Right lobe of liver (tissue), 6 donors: ENCODE measurements at regions of chr22 and their contacts with region 1.

Region 1: DNA sequence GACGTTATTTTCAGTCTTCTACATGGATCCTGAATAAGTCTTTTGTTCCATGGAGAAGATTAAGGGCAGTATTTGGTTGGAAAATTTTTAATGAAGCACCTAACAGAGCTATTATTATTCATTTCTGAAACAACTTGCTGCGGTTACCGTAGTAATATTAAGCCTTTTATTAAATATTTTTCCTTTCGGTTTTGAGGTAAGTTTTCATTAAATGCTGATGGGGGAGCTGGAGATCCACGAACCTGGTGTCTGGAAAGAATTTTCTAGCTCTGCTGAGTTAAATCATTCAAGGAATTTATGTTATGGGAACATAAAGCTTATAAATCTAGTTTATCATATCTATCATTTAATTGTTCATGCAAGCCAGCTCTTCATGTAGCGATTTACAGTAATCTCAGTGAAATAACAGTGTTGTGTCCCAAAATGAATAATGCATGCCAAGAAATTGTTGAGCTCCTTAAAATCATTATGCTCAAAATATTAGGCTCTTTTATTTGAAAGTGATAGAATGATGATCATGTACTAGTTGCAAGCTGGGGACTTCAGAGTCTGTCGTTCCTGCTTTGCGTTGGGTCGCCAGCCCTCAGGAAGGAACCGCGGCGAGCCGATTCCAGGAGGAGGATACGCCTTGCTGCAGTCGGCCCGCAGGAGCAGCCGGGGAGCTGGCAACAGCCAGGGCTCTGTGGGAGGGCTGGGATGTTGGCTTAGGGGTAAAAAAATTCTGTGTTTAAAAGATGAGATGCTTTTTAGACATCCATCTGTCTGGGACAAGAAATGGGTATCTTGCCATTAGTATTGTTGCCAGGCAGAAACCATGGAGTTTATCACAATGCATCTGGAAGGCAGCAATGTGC is 83.1 kb downstream of the TBC1D22A start:
- DNase-seq: no peak
- ATAC-seq: peak in 2 of 4 donors; percentile 13 to 36
- H3K4me3 ChIP-seq: no peak overlapping the region
- H3K27ac ChIP-seq: no peak overlapping the region
- H3K4me1 ChIP-seq: no peaks in the 10 kb centered on the region
- H3K27me3 ChIP-seq: no peaks in the 10 kb centered on the region
- CTCF ChIP-seq: peak; percentile 24 to 43 (median 40)
- POLR2A ChIP-seq: no peak

Region 2: GRCh38 chr22:47053726-47054141 is 208.2 kb after region 1 on chr22:
- intact Hi-C with region 1: loop called in 1 of 2 experiments (anchors 10 kb)
- DNase-seq: peak in 1 of 3 donors; percentile 16
- ATAC-seq: peak in 3 of 4 donors; percentile 28 to 52 (median 45)
- H3K4me3 ChIP-seq: no peak overlapping the region
- H3K27ac ChIP-seq: no peak overlapping the region
- H3K4me1 ChIP-seq: no peaks in the 10 kb centered on the region
- H3K27me3 ChIP-seq: no peaks in the 10 kb centered on the region
- CTCF ChIP-seq: no peak
- POLR2A ChIP-seq: no peak